ENCODE measurements at regions of chr9 and their contacts with region 1.

Region 1: GRCh38 chr9:99184475-99185347 is 37.0 kb downstream of the ALG2 start:
- DNase-seq: peak; percentile 59 to 75
- H3K4me3 ChIP-seq: no peak overlapping the region
- H3K27ac ChIP-seq: no peak overlapping the region
- H3K4me1 ChIP-seq: no peaks in the 10 kb centered on the region
- H3K27me3 ChIP-seq: peaks cover 9% of the 10 kb centered on the region; the same call in 1 of the 2 replicates
- CTCF ChIP-seq: peak; percentile 90

Region 2: GRCh38 chr9:99118782-99119466 is 65.8 kb before region 1 on chr9:
- CTCF ChIA-PET with region 1: no interaction called
- POLR2A ChIA-PET with region 1: no interaction called
- intact Hi-C with region 1: no loop called
- DNase-seq: no peak
- H3K4me3 ChIP-seq: no peak overlapping the region
- H3K27ac ChIP-seq: no peak overlapping the region
- H3K4me1 ChIP-seq: no peaks in the 10 kb centered on the region
- H3K27me3 ChIP-seq: no peaks in the 10 kb centered on the region
- CTCF ChIP-seq: no peak

Region 3: DNA sequence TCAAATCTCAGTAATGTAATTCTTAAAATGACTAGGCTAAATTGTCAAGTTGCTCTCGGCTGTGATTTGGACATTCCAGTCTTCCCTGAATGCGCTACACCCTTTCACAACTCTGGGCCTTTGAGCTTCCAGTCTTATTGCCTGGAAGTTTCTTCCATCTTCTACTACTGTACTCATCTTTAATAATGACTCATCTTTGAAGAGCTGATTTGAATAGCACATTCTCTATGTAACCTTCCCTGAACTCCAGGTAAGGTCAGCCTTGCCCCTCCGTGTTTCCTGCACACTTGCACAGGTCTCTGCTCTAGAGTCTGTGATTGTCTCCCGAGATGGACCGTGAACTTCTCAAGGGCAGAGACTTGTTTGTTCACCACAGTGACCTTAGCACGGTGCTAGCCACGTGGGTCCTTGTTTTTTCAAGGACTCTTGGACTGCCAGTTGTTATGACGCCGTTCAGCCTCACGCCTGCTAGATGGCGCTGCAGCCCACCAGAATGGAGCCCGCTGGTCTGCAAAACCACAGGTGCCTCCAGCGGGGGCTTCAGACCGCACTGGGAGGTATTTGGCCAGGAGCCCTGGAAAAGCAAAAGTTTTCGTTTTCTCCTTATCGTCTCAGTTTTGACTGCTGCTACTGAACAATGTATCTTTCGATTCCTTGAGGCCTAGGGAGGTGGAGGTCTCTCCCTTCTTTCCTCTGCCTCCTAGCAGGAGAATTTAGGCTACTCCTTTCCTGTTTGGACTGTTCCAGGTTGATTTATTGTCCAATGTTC is 81.7 kb after region 1 on chr9:
- CTCF ChIA-PET with region 1: no interaction called
- POLR2A ChIA-PET with region 1: no interaction called
- intact Hi-C with region 1: loop called (anchors 5 kb)
- DNase-seq: peak in 1 of 2 experiments; percentile 57
- H3K4me3 ChIP-seq: no peak overlapping the region
- H3K27ac ChIP-seq: no peak overlapping the region
- H3K4me1 ChIP-seq: no peaks in the 10 kb centered on the region
- H3K27me3 ChIP-seq: no peaks in the 10 kb centered on the region
- CTCF ChIP-seq: peak; percentile 83

Region 4: DNA sequence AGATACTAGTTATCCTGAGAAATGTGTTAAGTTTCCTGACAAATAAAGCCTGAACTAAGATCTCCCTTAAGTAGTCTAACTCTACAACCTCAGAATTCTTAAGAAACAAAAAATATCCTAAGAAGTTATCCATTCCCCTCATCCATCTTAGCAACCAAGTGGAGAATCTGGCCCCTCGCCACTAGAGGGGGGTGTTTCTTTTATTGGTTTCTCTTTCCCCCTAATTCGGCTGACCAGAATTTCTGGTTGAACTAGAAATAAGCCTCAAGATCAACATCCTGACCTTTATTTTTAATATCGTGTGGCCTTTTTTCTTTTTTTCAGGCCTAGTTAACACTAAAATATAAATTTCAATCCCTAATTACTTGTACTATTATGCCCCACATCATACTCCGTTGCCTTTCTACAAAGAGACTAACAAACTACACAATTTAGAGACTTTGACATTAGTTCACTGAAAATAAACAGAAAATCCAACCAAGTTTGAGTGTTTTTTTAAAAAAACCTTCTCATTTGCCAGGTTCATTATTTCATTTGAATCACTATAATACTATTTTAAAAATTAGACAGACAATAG is 622.7 kb after region 1 on chr9:
- CTCF ChIA-PET with region 1: no interaction called
- POLR2A ChIA-PET with region 1: no interaction called
- intact Hi-C with region 1: loop called (anchors 5 kb)
- DNase-seq: peak; percentile 65 to 73
- H3K4me3 ChIP-seq: no peak overlapping the region
- H3K27ac ChIP-seq: no peak overlapping the region
- H3K4me1 ChIP-seq: peaks cover 15% of the 10 kb centered on the region
- H3K27me3 ChIP-seq: no peaks in the 10 kb centered on the region
- CTCF ChIP-seq: peak; percentile 87

Measured in PC-9 (cell line).